ENCODE measurements at regions of chr1 and their contacts with region 1.

Region 1: GRCh38 chr1:36149237-36149972 is at the start of gene TRAPPC3:
- DNase-seq: peak; percentile 99 to 100
- H3K4me3 ChIP-seq: peak within 1 kb of the TSS; percentile 68 to 85 (median 79)
- H3K27ac ChIP-seq: peak within 1 kb of the TSS; percentile 62
- H3K4me1 ChIP-seq: peaks cover 8 to 19% (median 15%) of the 10 kb centered on the region in 4 experiments
- H3K27me3 ChIP-seq: peaks cover 11 to 21% (median 17%) of the 10 kb centered on the region in 4 experiments
- CTCF ChIP-seq: peak; percentile 95 to 99 (median 98)
- EP300 ChIP-seq: peak in 1 of 2 experiments; percentile 71; a peak in 1 of 3 replicates
- POLR2A ChIP-seq: peak in 1 of 2 experiments; percentile 73; a peak in 2 of 3 replicates
- RAD21 ChIP-seq: peak; percentile 98
- total RNA-seq, gene TRAPPC3: 42.0 and 47.8 TPM in 2 replicates

Region 2: GRCh38 chr1:36134505-36135329 is 14.7 kb before region 1 on chr1:
- CTCF ChIA-PET with region 1: interaction called, 44 read pairs
- POLR2A ChIA-PET with region 1: interaction called, 7 read pairs
- DNase-seq: peak in 1 of 2 experiments; percentile 90
- H3K4me3 ChIP-seq: no peak overlapping the region
- H3K27ac ChIP-seq: no peak overlapping the region
- H3K4me1 ChIP-seq: peaks cover 0 to 2% (median 0%) of the 10 kb centered on the region in 4 experiments; a peak in 2 of 7 replicates
- H3K27me3 ChIP-seq: no peaks in the 10 kb centered on the region
- CTCF ChIP-seq: peak; percentile 77 to 91 (median 83)
- EP300 ChIP-seq: no peak
- POLR2A ChIP-seq: no peak
- RAD21 ChIP-seq: peak; percentile 90 to 92

Region 3: GRCh38 chr1:36175137-36176095 is 26.0 kb after region 1 on chr1:
- CTCF ChIA-PET with region 1: interaction called, 162 read pairs
- POLR2A ChIA-PET with region 1: interaction called, 44 read pairs
- DNase-seq: peak in 1 of 2 experiments; percentile 61
- H3K4me3 ChIP-seq: peak overlapping the region in 2 of 4 experiments; percentile 15 to 48; a peak in 2 of 8 replicates
- H3K27ac ChIP-seq: peak overlapping the region; percentile 5
- H3K4me1 ChIP-seq: peaks cover 5 to 34% (median 28%) of the 10 kb centered on the region in 4 experiments
- H3K27me3 ChIP-seq: no peaks in the 10 kb centered on the region
- CTCF ChIP-seq: no peak
- EP300 ChIP-seq: no peak
- POLR2A ChIP-seq: no peak
- RAD21 ChIP-seq: no peak

Region 4: DNA sequence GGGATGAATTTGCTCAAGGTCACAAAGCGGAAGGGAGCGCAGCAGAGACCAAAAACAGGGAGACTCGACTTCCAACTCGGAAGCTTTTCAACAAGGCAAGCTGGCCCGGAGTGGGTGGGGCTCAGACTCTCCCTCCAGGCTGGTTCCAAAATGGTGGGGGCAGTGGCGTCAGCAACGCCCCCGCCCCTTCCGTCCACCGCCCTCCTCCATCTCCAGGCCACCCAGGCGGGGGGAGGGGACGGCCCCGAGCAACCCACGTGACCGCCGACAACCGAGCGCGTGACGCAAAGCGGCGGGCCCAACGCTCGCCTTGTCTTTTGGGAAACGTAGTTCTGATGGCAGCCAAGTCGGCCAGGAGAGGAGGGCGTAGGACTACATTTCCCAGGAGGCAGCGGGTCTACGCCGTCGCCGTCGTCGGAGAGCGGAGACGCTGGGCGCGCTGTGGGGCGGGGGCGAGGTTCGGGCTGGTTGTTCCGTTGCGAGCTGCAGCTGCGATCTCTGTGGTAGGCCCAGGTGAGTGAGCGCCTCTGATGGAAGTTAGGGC is 74.7 kb after region 1 on chr1 and contains the start of gene THRAP3:
- CTCF ChIA-PET with region 1: interaction called, 38 read pairs
- POLR2A ChIA-PET with region 1: interaction called, 17 read pairs
- DNase-seq: peak; percentile 98 to 99
- H3K4me3 ChIP-seq: peak within 1 kb of the TSS; percentile 91 to 96 (median 94)
- H3K27ac ChIP-seq: peak within 1 kb of the TSS; percentile 98
- H3K4me1 ChIP-seq: peaks cover 0 to 3% (median 0%) of the 10 kb centered on the region in 4 experiments; a peak in 1 of 7 replicates
- H3K27me3 ChIP-seq: no peaks in the 10 kb centered on the region
- CTCF ChIP-seq: no peak
- EP300 ChIP-seq: peak in 1 of 2 experiments; percentile 22; a peak in 2 of 3 replicates
- POLR2A ChIP-seq: peak; percentile 84 to 99
- RAD21 ChIP-seq: no peak
- total RNA-seq, gene THRAP3: 183 TPM in 2 replicates

Region 5: GRCh38 chr1:36279110-36279788 is 129.8 kb after region 1 on chr1:
- CTCF ChIA-PET with region 1: interaction called, 26 read pairs
- POLR2A ChIA-PET with region 1: no interaction called
- DNase-seq: no peak
- H3K4me3 ChIP-seq: no peak overlapping the region
- H3K27ac ChIP-seq: no peak overlapping the region
- H3K4me1 ChIP-seq: no peaks in the 10 kb centered on the region
- H3K27me3 ChIP-seq: no peaks in the 10 kb centered on the region
- CTCF ChIP-seq: no peak
- EP300 ChIP-seq: no peak
- POLR2A ChIP-seq: no peak
- RAD21 ChIP-seq: no peak

Region 6: DNA sequence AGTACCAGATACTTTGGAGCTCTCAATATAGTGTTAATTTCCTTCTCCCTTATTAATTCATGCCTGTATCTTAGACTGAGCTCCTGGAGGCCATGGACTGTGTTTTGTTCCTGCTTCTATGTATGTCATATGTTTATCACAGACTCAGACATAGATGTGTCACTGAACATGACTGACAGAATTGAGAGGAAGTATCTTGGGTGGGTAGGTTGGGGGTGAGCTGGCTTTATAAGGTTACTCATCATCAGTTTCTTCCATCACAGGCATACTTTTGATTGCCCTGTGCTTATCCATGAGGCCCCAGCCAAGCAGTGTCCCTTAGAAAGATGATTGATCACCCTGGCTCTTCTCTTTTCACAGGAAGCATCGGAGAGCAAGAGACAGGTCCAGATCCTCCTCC is 151.1 kb after region 1 on chr1:
- CTCF ChIA-PET with region 1: interaction called, 14 read pairs
- POLR2A ChIA-PET with region 1: interaction called, 21 read pairs
- DNase-seq: no peak
- H3K4me3 ChIP-seq: no peak overlapping the region
- H3K27ac ChIP-seq: no peak overlapping the region
- H3K4me1 ChIP-seq: no peaks in the 10 kb centered on the region; a peak in 1 of 7 replicates
- H3K27me3 ChIP-seq: no peaks in the 10 kb centered on the region
- CTCF ChIP-seq: no peak
- EP300 ChIP-seq: no peak
- POLR2A ChIP-seq: no peak
- RAD21 ChIP-seq: no peak

Measured in H1 (cell line).